A673 (cell line): ENCODE measurements at regions of chr11 and their contacts with region 1.

Region 1: DNA sequence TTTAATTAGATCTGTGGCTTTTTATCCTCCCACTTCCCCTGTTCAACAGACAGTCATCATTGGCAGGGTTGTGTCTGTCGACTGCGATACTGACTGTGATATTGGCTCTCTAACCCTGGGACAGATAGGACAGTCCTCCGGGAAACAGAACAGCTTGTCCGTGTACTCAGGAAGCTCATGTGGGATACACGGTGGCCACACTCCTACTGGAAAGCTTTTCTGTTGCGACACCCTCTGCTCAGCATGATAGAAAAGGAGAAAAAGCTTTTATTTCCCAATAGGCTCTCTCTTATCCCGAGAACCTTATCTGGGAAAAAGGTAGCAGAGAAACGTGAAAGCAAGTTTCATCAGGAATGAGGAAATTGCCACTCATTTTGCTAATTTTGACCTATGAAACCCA is 60.4 kb upstream of the HSPA8 start:
- DNase-seq: peak; percentile 52
- H3K4me3 ChIP-seq: no peak overlapping the region
- H3K27ac ChIP-seq: peak overlapping the region; percentile 60
- H3K4me1 ChIP-seq: peaks cover 25% of the 10 kb centered on the region
- H3K27me3 ChIP-seq: no peaks in the 10 kb centered on the region
- CTCF ChIP-seq: no peak

Region 2: GRCh38 chr11:123137431-123138224 is 15.3 kb after region 1 on chr11:
- CTCF ChIA-PET with region 1: interaction called, 11 read pairs
- POLR2A ChIA-PET with region 1: no interaction called
- intact Hi-C with region 1: no loop called
- DNase-seq: peak; percentile 97
- H3K4me3 ChIP-seq: peak overlapping the region; percentile 1
- H3K27ac ChIP-seq: peak overlapping the region; percentile 90
- H3K4me1 ChIP-seq: peaks cover 53% of the 10 kb centered on the region
- H3K27me3 ChIP-seq: no peaks in the 10 kb centered on the region
- CTCF ChIP-seq: no peak